B cell (primary cell): ENCODE measurements at regions of chr10 and their contacts with region 1.

Region 1: DNA sequence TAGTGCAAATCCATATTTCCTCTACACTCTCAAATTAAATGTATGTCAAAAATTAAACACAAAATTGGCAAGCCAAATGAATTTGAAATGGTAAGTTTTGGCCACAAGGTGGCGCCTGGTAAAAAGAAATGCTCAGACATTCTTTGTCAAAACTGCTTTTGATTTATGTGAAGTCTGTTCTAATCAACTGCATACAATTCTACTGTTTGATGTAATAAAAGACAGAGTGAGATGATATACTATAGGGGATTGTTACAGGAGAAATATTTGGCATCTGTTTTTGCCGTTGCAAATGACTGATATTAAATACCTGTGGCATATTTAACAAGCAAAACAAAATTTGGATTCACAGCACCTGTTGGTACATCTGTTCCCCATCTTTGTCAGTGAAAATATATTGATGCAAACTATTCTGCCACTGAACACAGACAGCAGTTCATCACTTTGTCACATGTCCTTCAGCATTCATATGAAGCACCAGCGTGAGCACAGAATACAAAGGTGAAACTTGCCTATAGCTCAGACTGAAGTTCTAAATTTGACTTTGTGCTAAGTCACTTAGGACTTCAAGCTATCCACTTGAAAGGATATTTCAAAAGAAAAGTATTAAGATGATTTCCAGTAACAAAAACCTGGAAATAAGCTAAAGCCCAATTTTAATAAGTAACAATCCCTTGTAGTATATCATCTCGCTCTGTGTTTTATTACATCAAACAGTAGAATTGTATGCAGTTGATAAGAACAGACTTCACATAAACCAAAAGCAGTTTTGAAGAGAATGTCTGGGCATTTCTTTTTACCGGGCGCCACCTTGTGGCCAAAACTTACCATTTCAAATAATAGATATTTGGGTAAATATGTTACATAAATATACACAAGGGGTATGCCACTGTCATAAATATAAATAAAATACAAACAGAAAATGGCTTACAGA is 10.2 kb upstream of the CH25H start:
- DNase-seq: peak; percentile 71
- ATAC-seq: peak; percentile 47
- H3K4me3 ChIP-seq: no peak overlapping the region
- H3K4me3 Mint-ChIP-seq: no peak overlapping the region
- H3K27ac ChIP-seq: peak overlapping the region in 1 of 2 donors; percentile 45
- H3K27ac Mint-ChIP-seq: peak overlapping the region; percentile 68
- H3K4me1 ChIP-seq: peaks cover 5 to 6% of the 10 kb centered on the region in 2 donors
- H3K4me1 Mint-ChIP-seq: peaks cover 8% of the 10 kb centered on the region
- H3K27me3 ChIP-seq: no peaks in the 10 kb centered on the region
- H3K27me3 Mint-ChIP-seq: no peaks in the 10 kb centered on the region
- CTCF ChIP-seq: peak; percentile 78

Region 2: GRCh38 chr10:88944813-88945212 is 272.5 kb before region 1 on chr10:
- CTCF ChIA-PET with region 1: interaction called, 12 read pairs
- POLR2A ChIA-PET with region 1: no interaction called
- intact Hi-C with region 1: no loop called
- DNase-seq: peak; percentile 32
- ATAC-seq: peak; percentile 24
- H3K4me3 ChIP-seq: no peak overlapping the region
- H3K4me3 Mint-ChIP-seq: no peak overlapping the region
- H3K27ac ChIP-seq: no peak overlapping the region
- H3K27ac Mint-ChIP-seq: no peak overlapping the region
- H3K4me1 ChIP-seq: peaks cover 10 to 11% of the 10 kb centered on the region in 2 donors
- H3K4me1 Mint-ChIP-seq: peaks cover 18% of the 10 kb centered on the region
- H3K27me3 ChIP-seq: no peaks in the 10 kb centered on the region
- H3K27me3 Mint-ChIP-seq: no peaks in the 10 kb centered on the region
- CTCF ChIP-seq: no peak

Region 3: GRCh38 chr10:89207181-89207800 is 10.0 kb before region 1 on chr10 and contains the start of gene CH25H:
- CTCF ChIA-PET with region 1: interaction called, 39 read pairs
- POLR2A ChIA-PET with region 1: no interaction called
- intact Hi-C with region 1: no loop called
- DNase-seq: peak; percentile 66
- ATAC-seq: peak; percentile 42
- H3K4me3 ChIP-seq: peak within 1 kb of the TSS; percentile 25 to 85 (median 62)
- H3K4me3 Mint-ChIP-seq: peak within 1 kb of the TSS; percentile 90
- H3K27ac ChIP-seq: no peak within 1 kb of the TSS
- H3K27ac Mint-ChIP-seq: peak within 1 kb of the TSS; percentile 7
- H3K4me1 ChIP-seq: peaks cover 32 to 34% of the 10 kb centered on the region in 2 donors
- H3K4me1 Mint-ChIP-seq: peaks cover 30% of the 10 kb centered on the region
- H3K27me3 ChIP-seq: peaks cover 0 to 59% (median 43%) of the 10 kb centered on the region in 4 experiments
- H3K27me3 Mint-ChIP-seq: peaks cover 48% of the 10 kb centered on the region
- CTCF ChIP-seq: no peak
- total RNA-seq, gene CH25H: not detected in 2 replicates

Region 4: GRCh38 chr10:89235073-89235798 is 17.9 kb after region 1 on chr10:
- CTCF ChIA-PET with region 1: interaction called, 71 read pairs
- POLR2A ChIA-PET with region 1: no interaction called
- intact Hi-C with region 1: no loop called
- DNase-seq: no peak
- ATAC-seq: no peak
- H3K4me3 ChIP-seq: no peak overlapping the region
- H3K4me3 Mint-ChIP-seq: no peak overlapping the region
- H3K27ac ChIP-seq: no peak overlapping the region
- H3K27ac Mint-ChIP-seq: no peak overlapping the region
- H3K4me1 ChIP-seq: no peaks in the 10 kb centered on the region
- H3K4me1 Mint-ChIP-seq: no peaks in the 10 kb centered on the region
- H3K27me3 ChIP-seq: no peaks in the 10 kb centered on the region
- H3K27me3 Mint-ChIP-seq: no peaks in the 10 kb centered on the region
- CTCF ChIP-seq: no peak

Region 5: GRCh38 chr10:89251409-89252224 is 34.3 kb after region 1 on chr10 and contains the start of gene LIPA:
- CTCF ChIA-PET with region 1: interaction called, 13 read pairs
- POLR2A ChIA-PET with region 1: no interaction called
- intact Hi-C with region 1: loop called (anchors 2 kb)
- DNase-seq: peak; percentile 99
- ATAC-seq: peak; percentile 95
- H3K4me3 ChIP-seq: peak within 1 kb of the TSS; percentile 65 to 92 (median 84)
- H3K4me3 Mint-ChIP-seq: peak within 1 kb of the TSS; percentile 94
- H3K27ac ChIP-seq: peak within 1 kb of the TSS; percentile 48 to 71
- H3K27ac Mint-ChIP-seq: peak within 1 kb of the TSS; percentile 85
- H3K4me1 ChIP-seq: peaks cover 18% of the 10 kb centered on the region in 2 donors
- H3K4me1 Mint-ChIP-seq: peaks cover 24% of the 10 kb centered on the region
- H3K27me3 ChIP-seq: no peaks in the 10 kb centered on the region
- H3K27me3 Mint-ChIP-seq: no peaks in the 10 kb centered on the region
- CTCF ChIP-seq: no peak
- total RNA-seq, gene LIPA: 36.5 and 38.9 TPM in 2 replicates

Region 6: GRCh38 chr10:89563861-89564478 is 346.6 kb after region 1 on chr10:
- CTCF ChIA-PET with region 1: interaction called, 17 read pairs
- POLR2A ChIA-PET with region 1: no interaction called
- intact Hi-C with region 1: loop called (anchors 1 kb)
- DNase-seq: peak; percentile 67
- ATAC-seq: peak; percentile 53
- H3K4me3 ChIP-seq: no peak overlapping the region
- H3K4me3 Mint-ChIP-seq: no peak overlapping the region
- H3K27ac ChIP-seq: no peak overlapping the region
- H3K27ac Mint-ChIP-seq: no peak overlapping the region
- H3K4me1 ChIP-seq: no peaks in the 10 kb centered on the region
- H3K4me1 Mint-ChIP-seq: no peaks in the 10 kb centered on the region
- H3K27me3 ChIP-seq: no peaks in the 10 kb centered on the region
- H3K27me3 Mint-ChIP-seq: peaks cover 9% of the 10 kb centered on the region
- CTCF ChIP-seq: peak; percentile 84